OCI-LY7 (cell line): ENCODE measurements at regions of chr16 and their contacts with region 1.

Region 1: GRCh38 chr16:84585886-84586285 is 32.0 kb downstream of the COTL1 start:
- DNase-seq: peak; percentile 80
- H3K4me3 ChIP-seq: peak overlapping the region; percentile 45
- H3K27ac ChIP-seq: peak overlapping the region; percentile 69
- H3K4me1 ChIP-seq: peaks cover 33% of the 10 kb centered on the region
- CTCF ChIP-seq: no peak

Region 2: DNA sequence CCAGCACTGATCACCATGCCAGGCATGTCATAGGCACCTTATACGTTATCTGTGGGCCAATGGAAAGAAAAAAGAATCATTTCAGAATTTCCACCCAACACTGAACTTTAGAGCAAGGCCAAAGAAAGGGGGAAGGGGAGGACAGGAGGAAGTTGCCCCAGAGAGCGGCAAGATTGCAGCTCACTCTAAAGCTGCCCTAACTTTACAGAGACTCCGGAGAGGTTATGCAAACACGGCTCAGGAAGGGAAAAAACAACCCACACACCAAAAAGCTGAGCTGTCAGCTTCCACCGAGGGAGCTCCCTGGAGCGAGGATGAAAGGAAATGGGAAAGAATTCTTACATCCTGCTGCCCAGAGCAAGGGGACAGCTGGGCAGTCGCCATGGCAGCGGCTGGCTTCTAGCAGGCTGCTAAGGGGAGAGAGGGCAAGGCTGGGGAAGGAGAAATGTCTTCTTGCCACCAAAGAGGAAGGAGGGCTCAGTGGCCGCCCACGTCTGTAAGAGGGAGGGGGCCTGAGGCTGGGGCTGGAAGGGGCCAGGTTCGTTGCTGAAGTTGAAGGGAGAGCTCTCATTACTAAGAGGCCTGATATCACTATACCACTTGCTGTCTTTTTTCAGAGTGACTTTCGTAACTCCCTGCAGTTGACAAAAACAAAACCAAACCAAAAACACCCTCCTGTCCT is 13.8 kb after region 1 on chr16:
- CTCF ChIA-PET with region 1: no interaction called
- POLR2A ChIA-PET with region 1: interaction called, 10 read pairs
- intact Hi-C with region 1: no loop called
- DNase-seq: peak; percentile 71
- H3K4me3 ChIP-seq: peak overlapping the region; percentile 60
- H3K27ac ChIP-seq: peak overlapping the region; percentile 97
- H3K4me1 ChIP-seq: peaks cover 93% of the 10 kb centered on the region
- CTCF ChIP-seq: no peak

Region 3: GRCh38 chr16:84672276-84673202 is 86.7 kb after region 1 on chr16:
- CTCF ChIA-PET with region 1: no interaction called
- POLR2A ChIA-PET with region 1: no interaction called
- intact Hi-C with region 1: no loop called
- DNase-seq: peak; percentile 81
- H3K4me3 ChIP-seq: no peak overlapping the region
- H3K27ac ChIP-seq: no peak overlapping the region
- H3K4me1 ChIP-seq: peaks cover 9% of the 10 kb centered on the region
- CTCF ChIP-seq: peak; percentile 97